CD4-positive, alpha-beta memory T cell (primary cell): ENCODE measurements at regions of chr7 and their contacts with region 1.

Region 1: GRCh38 chr7:121547544-121548092 is 151.5 kb upstream of the FAM3C start:
- DNase-seq: peak in 4 of 5 donors; percentile 42 to 58 (median 48)
- H3K4me3 ChIP-seq: no peak overlapping the region
- H3K4me3 Mint-ChIP-seq: no peak overlapping the region
- H3K27ac ChIP-seq: no peak overlapping the region
- H3K27ac Mint-ChIP-seq: no peak overlapping the region
- H3K4me1 ChIP-seq: no peaks in the 10 kb centered on the region
- H3K4me1 Mint-ChIP-seq: peaks cover 0 to 6% (median 5%) of the 10 kb centered on the region in 4 donors
- H3K27me3 ChIP-seq: no peaks in the 10 kb centered on the region
- H3K27me3 Mint-ChIP-seq: peaks cover 0 to 3% of the 10 kb centered on the region in 2 donors

Region 2: GRCh38 chr7:120805636-120806388 is 741.8 kb before region 1 on chr7:
- CTCF ChIA-PET with region 1: no interaction called
- POLR2A ChIA-PET with region 1: no interaction called
- intact Hi-C with region 1: loop called (anchors 5 kb)
- DNase-seq: peak; percentile 39 to 46 (median 43)
- H3K4me3 ChIP-seq: no peak overlapping the region
- H3K4me3 Mint-ChIP-seq: no peak overlapping the region
- H3K27ac ChIP-seq: no peak overlapping the region
- H3K27ac Mint-ChIP-seq: no peak overlapping the region
- H3K4me1 ChIP-seq: no peaks in the 10 kb centered on the region
- H3K4me1 Mint-ChIP-seq: no peaks in the 10 kb centered on the region
- H3K27me3 ChIP-seq: no peaks in the 10 kb centered on the region
- H3K27me3 Mint-ChIP-seq: peaks cover 5 to 8% of the 10 kb centered on the region in 2 donors

Region 3: GRCh38 chr7:121107923-121108498 is 439.6 kb before region 1 on chr7:
- CTCF ChIA-PET with region 1: interaction called, 3 read pairs
- POLR2A ChIA-PET with region 1: no interaction called
- intact Hi-C with region 1: loop called (anchors 5 kb)
- DNase-seq: peak in 4 of 5 donors; percentile 47 to 56 (median 54)
- H3K4me3 ChIP-seq: no peak overlapping the region
- H3K4me3 Mint-ChIP-seq: no peak overlapping the region
- H3K27ac ChIP-seq: no peak overlapping the region
- H3K27ac Mint-ChIP-seq: no peak overlapping the region
- H3K4me1 ChIP-seq: no peaks in the 10 kb centered on the region
- H3K4me1 Mint-ChIP-seq: no peaks in the 10 kb centered on the region
- H3K27me3 ChIP-seq: no peaks in the 10 kb centered on the region
- H3K27me3 Mint-ChIP-seq: peaks cover 3 to 10% of the 10 kb centered on the region in 2 donors

Region 4: GRCh38 chr7:121437456-121438127 is 110.0 kb before region 1 on chr7:
- CTCF ChIA-PET with region 1: interaction called, 4 read pairs
- POLR2A ChIA-PET with region 1: interaction called, 6 read pairs
- intact Hi-C with region 1: loop called (anchors 2 kb)
- DNase-seq: no peak
- H3K4me3 ChIP-seq: peak overlapping the region in 1 of 2 donors; percentile 38
- H3K4me3 Mint-ChIP-seq: peak overlapping the region; percentile 69 to 88 (median 78)
- H3K27ac ChIP-seq: peak overlapping the region; percentile 30
- H3K27ac Mint-ChIP-seq: peak overlapping the region; percentile 73 to 95 (median 93)
- H3K4me1 ChIP-seq: peaks cover 29% of the 10 kb centered on the region
- H3K4me1 Mint-ChIP-seq: peaks cover 21 to 46% (median 37%) of the 10 kb centered on the region in 4 donors
- H3K27me3 ChIP-seq: no peaks in the 10 kb centered on the region
- H3K27me3 Mint-ChIP-seq: no peaks in the 10 kb centered on the region

Region 5: GRCh38 chr7:121558288-121558687 is 10.7 kb after region 1 on chr7:
- CTCF ChIA-PET with region 1: interaction called, 12 read pairs
- POLR2A ChIA-PET with region 1: no interaction called
- intact Hi-C with region 1: no loop called
- DNase-seq: no peak
- H3K4me3 ChIP-seq: no peak overlapping the region
- H3K4me3 Mint-ChIP-seq: no peak overlapping the region
- H3K27ac ChIP-seq: no peak overlapping the region
- H3K27ac Mint-ChIP-seq: no peak overlapping the region
- H3K4me1 ChIP-seq: no peaks in the 10 kb centered on the region
- H3K4me1 Mint-ChIP-seq: no peaks in the 10 kb centered on the region
- H3K27me3 ChIP-seq: no peaks in the 10 kb centered on the region
- H3K27me3 Mint-ChIP-seq: peaks cover 0 to 6% of the 10 kb centered on the region in 2 donors

Region 6: GRCh38 chr7:121595758-121596696 is 48.4 kb after region 1 on chr7:
- CTCF ChIA-PET with region 1: no interaction called
- POLR2A ChIA-PET with region 1: no interaction called
- intact Hi-C with region 1: no loop called
- DNase-seq: no peak
- H3K4me3 ChIP-seq: no peak overlapping the region
- H3K4me3 Mint-ChIP-seq: no peak overlapping the region
- H3K27ac ChIP-seq: no peak overlapping the region
- H3K27ac Mint-ChIP-seq: no peak overlapping the region
- H3K4me1 ChIP-seq: no peaks in the 10 kb centered on the region
- H3K4me1 Mint-ChIP-seq: no peaks in the 10 kb centered on the region
- H3K27me3 ChIP-seq: no peaks in the 10 kb centered on the region
- H3K27me3 Mint-ChIP-seq: peaks cover 0 to 2% of the 10 kb centered on the region in 2 donors

Region 7: GRCh38 chr7:122182081-122182480 is 634.5 kb after region 1 on chr7:
- CTCF ChIA-PET with region 1: no interaction called
- POLR2A ChIA-PET with region 1: no interaction called
- intact Hi-C with region 1: no loop called
- DNase-seq: no peak
- H3K4me3 ChIP-seq: no peak overlapping the region
- H3K4me3 Mint-ChIP-seq: no peak overlapping the region
- H3K27ac ChIP-seq: no peak overlapping the region
- H3K27ac Mint-ChIP-seq: no peak overlapping the region
- H3K4me1 ChIP-seq: no peaks in the 10 kb centered on the region
- H3K4me1 Mint-ChIP-seq: no peaks in the 10 kb centered on the region
- H3K27me3 ChIP-seq: no peaks in the 10 kb centered on the region
- H3K27me3 Mint-ChIP-seq: peaks cover 0 to 3% of the 10 kb centered on the region in 2 donors